WTC11 (cell line): ENCODE measurements at regions of chr9 and their contacts with region 1.

Region 1: DNA sequence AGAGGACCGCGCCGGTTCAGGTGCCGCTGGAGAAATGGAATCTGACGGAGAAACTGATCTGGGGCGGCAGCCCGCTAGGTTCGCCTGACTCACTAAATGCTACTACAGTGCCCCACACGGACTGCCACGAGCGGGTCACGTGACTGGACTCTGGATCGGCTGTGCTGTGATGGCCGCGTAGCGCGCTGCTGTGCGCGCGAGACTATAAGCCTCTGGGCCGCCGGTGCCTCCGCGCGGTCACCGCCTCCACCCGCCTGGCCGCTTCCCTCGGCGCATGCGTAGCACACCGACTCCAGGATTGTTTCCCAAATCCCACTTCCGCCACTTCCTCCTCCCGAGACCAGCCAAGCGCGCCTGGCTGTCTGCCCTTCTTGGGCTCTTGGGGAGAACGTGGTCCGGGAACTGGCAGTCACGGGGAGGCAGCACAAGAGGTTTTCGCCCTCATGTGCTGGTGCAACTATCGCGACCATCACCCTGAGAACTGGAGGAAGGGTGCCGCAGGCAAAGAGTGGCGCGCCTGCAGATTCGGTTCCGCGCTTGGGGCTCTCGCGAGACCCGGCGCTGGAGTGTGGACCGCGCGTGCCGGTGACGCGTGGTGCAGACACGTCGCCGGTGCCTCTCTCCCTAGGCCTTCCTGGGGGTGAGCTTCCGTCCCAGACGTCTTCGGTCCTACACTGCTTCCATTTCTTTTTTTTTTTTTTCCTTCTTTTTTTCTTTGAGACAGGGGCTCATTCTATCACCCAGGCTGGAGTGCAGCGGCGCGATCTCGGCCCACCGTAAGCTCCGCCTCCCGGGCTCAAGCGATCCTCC is 35.8 kb upstream of the GLDC start:
- DNase-seq: peak; percentile 94
- ATAC-seq: peak; percentile 91
- H3K4me3 Mint-ChIP-seq: peak overlapping the region; percentile 86
- H3K27ac Mint-ChIP-seq: peak overlapping the region; percentile 99
- H3K4me1 Mint-ChIP-seq: peaks cover 18% of the 10 kb centered on the region
- H3K27me3 Mint-ChIP-seq: no peaks in the 10 kb centered on the region
- CTCF ChIP-seq: no peak

Region 2: DNA sequence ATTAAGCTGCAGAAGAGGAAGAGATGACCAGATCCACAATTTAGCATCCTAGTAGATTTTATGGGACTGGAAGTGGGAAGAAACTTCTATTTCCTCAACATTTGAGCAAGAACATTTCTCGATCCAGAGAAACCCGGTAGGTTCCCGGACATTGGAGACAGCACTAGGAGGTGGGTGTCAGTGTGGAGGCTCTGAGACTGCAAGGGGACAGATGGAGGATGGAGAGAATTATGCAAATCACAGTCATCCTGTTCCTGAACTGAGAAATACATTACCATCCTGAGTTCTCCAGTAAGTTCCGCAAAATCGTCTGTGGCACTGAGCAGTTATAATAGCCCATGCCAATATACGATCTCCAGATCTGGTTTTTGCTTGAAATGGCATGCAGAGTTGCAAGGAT is 61.4 kb before region 1 on chr9:
- CTCF ChIA-PET with region 1: no interaction called
- POLR2A ChIA-PET with region 1: no interaction called
- DNase-seq: no peak
- ATAC-seq: no peak
- H3K4me3 Mint-ChIP-seq: no peak overlapping the region
- H3K27ac Mint-ChIP-seq: no peak overlapping the region
- H3K4me1 Mint-ChIP-seq: peaks cover 17% of the 10 kb centered on the region
- H3K27me3 Mint-ChIP-seq: no peaks in the 10 kb centered on the region
- CTCF ChIP-seq: no peak

Region 3: DNA sequence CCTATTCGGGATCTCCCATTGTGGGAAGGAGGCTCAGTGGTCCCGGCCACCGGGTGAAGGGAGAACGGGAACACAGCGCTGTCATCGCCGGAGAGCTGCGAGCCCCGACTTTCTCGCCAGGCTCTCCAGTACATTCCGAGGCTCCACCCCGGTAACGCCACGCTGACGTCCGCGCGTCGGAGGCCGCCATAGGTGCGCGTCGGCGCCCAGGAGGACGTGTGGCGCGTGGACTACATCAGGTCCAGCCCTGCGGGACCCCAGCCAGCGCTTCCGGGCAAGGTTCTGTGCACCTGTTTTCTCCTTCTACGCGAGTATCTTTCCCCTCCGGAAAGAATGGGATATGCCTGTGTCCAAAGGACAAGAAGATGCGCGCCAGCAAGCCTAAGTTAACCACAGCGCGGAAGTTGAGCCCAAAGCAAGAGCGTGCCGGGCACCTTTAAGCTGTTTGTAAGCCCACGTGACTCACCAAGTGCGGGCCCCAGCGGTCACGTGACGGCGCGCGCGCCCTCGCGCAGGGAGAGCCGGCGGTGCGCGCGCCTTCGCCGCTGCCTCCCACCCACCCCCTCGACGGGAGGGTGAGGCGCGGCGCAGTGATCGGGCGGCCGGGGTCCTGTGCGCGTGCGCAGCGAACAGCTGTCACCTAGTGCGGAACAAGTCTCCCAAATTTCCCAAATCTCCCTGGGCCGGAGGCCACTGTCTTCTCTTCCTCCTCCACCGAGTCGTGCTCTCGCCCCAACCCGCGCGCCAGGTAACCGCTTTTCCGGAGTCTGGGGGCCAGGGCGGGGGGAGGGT is 76.3 kb after region 1 on chr9 and contains the start of gene KDM4C:
- CTCF ChIA-PET with region 1: interaction called, 3 read pairs
- POLR2A ChIA-PET with region 1: interaction called, 10 read pairs
- DNase-seq: peak; percentile 97
- ATAC-seq: peak; percentile 79
- H3K4me3 Mint-ChIP-seq: peak within 1 kb of the TSS; percentile 90
- H3K27ac Mint-ChIP-seq: peak within 1 kb of the TSS; percentile 100
- H3K4me1 Mint-ChIP-seq: peaks cover 29% of the 10 kb centered on the region
- H3K27me3 Mint-ChIP-seq: no peaks in the 10 kb centered on the region; the same call in 1 of the 2 replicates
- CTCF ChIP-seq: no peak
- total RNA-seq, gene KDM4C: 29.2 to 35.5 TPM (median 34.0 TPM) in 3 replicates

Region 4: GRCh38 chr9:7121055-7121454 is 439.7 kb after region 1 on chr9:
- CTCF ChIA-PET with region 1: no interaction called
- POLR2A ChIA-PET with region 1: no interaction called
- DNase-seq: no peak
- ATAC-seq: no peak
- H3K4me3 Mint-ChIP-seq: no peak overlapping the region
- H3K27ac Mint-ChIP-seq: no peak overlapping the region
- H3K4me1 Mint-ChIP-seq: 0 out of 2 replicates have a peak, but pooled peaks cover 9% of the 10 kb centered on the region
- H3K27me3 Mint-ChIP-seq: no peaks in the 10 kb centered on the region
- CTCF ChIP-seq: no peak

Region 5: DNA sequence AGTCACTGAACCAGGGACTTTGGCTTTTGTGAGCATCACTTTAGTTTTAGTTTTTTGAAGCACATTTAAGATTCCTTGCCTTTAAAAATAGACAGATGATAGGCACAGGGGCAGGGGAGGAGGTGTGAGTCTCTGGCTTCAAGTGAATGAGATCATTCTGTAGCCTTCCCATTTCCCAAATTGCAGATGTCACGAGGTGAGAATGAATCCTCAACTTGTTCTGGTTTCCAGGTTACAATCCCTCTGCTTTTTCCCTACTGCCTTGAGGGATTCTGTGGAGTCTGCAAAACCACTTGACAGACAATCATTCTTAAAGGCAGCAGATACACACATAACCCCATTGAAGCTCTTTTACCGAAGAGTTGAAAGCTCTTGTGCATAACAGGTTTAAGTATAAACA is 785.8 kb after region 1 on chr9:
- CTCF ChIA-PET with region 1: no interaction called
- POLR2A ChIA-PET with region 1: no interaction called
- DNase-seq: no peak
- ATAC-seq: no peak
- H3K4me3 Mint-ChIP-seq: no peak overlapping the region
- H3K27ac Mint-ChIP-seq: no peak overlapping the region
- H3K4me1 Mint-ChIP-seq: no peaks in the 10 kb centered on the region
- H3K27me3 Mint-ChIP-seq: no peaks in the 10 kb centered on the region
- CTCF ChIP-seq: no peak